Gastrocnemius medialis (tissue), 4 donors: ENCODE measurements at regions of chr22 and their contacts with region 1.

Region 1: DNA sequence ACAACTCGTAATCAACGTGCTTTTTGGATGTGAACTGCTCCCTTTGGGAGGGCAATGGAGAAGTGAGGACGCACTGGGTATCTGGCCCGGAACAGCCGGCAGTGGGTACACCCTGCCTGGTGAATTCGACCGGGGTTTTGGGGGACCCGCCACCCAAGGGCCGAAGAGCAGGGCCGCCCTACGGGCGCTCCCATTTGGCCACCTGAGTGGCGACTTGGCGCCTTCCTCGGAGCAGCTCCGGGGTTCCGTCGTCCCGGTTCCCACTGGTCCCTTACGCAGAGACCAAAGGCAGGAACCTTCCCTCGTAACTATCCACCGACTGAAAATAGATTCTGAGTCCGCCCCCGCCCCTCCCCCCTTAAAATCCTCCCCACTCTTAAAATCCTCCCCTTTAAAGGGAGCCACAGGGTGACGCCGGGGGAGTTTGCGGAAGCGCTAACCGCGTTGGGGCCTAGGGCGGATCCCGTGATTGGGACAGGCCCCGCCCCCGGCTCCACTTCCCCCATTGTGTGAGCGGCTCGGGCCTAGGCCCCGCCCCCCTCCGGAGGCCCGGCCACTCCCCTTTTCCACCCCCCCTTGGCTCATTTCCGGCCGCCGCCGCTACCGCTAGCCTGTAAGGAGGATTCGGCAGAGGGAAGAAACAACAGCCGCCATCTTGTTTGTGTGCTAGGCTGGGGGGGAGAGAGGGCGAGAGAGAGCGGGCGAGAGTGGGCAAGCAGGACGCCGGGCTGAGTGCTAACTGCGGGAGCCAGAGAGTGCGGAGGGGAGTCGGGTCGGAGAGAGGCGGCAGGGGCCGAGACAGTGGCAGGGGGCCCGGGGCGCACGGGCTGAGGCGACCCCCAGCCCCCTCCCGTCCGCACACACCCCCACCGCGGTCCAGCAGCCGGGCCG is 1.0 kb upstream of the EP300 start:
- DNase-seq: peak; percentile 99
- ATAC-seq: peak; percentile 85 to 88
- H3K4me3 ChIP-seq: peak overlapping the region; percentile 76 to 97 (median 88)
- H3K27ac ChIP-seq: peak overlapping the region; percentile 98 to 100 (median 99)
- H3K4me1 ChIP-seq: peaks cover 27 to 36% of the 10 kb centered on the region in 2 donors
- H3K27me3 ChIP-seq: no peaks in the 10 kb centered on the region
- CTCF ChIP-seq: no peak
- POLR2A ChIP-seq: peak; percentile 79 to 92

Region 2: DNA sequence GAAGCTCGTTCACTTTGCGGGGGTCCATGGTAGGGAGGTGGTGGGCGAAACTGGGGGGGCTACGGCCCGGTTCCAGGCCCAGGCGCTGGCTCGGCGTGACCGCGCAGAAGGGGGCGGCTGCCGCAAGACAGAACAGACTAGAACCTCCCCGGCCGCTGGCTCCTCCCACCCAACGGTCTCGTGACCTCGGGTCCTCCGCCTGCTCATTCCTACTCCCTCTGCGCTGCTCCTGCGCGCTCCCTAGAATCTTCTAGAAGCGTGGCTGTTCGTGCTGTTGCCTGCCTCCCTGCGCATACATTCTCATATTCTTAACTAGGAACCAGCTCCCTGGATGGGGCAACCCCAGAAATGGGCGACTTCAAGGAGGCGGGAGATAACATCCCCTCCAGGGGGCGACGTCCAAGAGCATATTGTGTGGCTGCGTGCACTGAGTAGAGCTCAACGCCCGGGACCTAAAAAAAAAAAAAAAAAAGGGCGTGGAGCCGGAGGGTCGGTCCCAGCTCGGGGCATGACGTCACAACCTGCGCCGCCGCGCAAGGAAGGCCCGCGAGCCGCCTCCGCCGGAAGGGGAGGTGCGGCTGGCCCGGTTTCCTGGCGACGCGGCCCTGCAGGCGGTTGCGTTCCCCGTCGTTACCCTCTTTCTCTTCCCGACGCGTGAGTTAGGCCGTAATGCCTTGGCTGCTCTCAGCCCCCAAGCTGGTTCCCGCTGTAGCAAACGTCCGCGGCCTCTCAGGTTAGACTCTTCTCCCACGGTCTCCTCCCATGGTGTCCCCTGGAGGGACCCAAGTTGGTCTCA is 234.7 kb before region 1 on chr22 and contains the starts of genes ST13 and XPNPEP3:
- in situ Hi-C with region 1: no loop called
- intact Hi-C with region 1: loop called (anchors 5 kb)
- DNase-seq: peak; percentile 98
- ATAC-seq: peak; percentile 96 to 97
- H3K4me3 ChIP-seq: peak within 1 kb of the TSS; percentile 79 to 98 (median 90)
- H3K27ac ChIP-seq: peak within 1 kb of the TSS; percentile 96 to 99 (median 98)
- H3K4me1 ChIP-seq: peaks cover 48 to 56% of the 10 kb centered on the region in 2 donors
- H3K27me3 ChIP-seq: no peaks in the 10 kb centered on the region
- CTCF ChIP-seq: peak in 4 of 5 experiments; percentile 18 to 55 (median 25)
- POLR2A ChIP-seq: peak; percentile 88
- total RNA-seq, gene ST13: 122 to 265 (median 197) TPM
- total RNA-seq, gene XPNPEP3: 3.6 to 12.4 (median 7.4) TPM

Region 3: GRCh38 chr22:41022470-41023298 is 68.7 kb before region 1 on chr22:
- in situ Hi-C with region 1: loop called in 2 of 4 experiments (anchors 10 kb)
- intact Hi-C with region 1: loop called (anchors 1 kb)
- DNase-seq: peak; percentile 92 to 94
- ATAC-seq: peak; percentile 87 to 90
- H3K4me3 ChIP-seq: peak overlapping the region; percentile 71 to 85 (median 81)
- H3K27ac ChIP-seq: peak overlapping the region; percentile 89 to 99 (median 94)
- H3K4me1 ChIP-seq: peaks cover 5% of the 10 kb centered on the region in 2 donors
- H3K27me3 ChIP-seq: no peaks in the 10 kb centered on the region
- CTCF ChIP-seq: peak in 2 of 5 experiments; percentile 3 to 6
- POLR2A ChIP-seq: peak; percentile 84 to 88

Region 4: DNA sequence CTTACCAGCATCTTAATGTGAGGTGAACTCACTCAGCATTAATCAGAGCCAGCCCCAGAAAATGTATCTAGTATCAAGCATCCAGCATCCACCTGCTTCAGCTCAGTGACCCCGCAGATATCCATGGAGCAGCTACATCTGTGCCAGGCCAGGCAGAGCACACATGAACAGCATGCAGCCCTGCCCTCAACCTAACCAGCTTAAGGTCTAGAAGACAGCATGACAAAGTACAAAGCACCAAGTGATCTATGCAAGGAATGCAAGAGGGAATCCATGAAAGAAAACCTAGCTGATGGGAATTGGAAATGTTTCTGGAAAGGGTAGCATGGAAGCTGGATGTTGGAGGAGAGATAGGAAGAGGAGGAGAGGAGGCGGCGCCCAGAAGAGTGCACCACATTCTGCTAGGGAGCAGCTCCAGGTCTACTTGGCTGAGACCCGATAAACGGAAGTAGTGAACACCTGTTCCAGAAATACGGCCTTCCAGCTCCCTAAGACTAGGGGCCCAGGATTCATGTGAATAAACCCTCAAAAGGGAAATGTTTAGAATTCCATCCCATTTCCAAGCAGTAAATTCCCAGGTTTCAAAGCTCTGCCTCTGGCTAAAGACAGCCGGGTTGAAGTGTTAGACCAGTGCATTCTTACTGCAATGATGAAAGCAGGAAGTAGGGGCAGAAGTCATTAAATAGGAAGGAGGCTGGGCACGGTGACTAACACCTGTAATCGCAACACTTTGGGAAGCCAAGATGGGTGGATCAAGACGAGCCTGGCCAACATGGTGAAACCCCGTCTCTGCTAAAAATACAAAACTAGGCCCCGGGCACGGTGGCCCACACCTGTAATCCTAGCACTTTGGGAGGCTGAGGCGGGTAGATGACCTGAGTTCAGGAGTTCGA is 90.2 kb after region 1 on chr22:
- in situ Hi-C with region 1: no loop called
- intact Hi-C with region 1: loop called (anchors 5 kb)
- DNase-seq: peak in 1 of 2 donors; percentile 68
- ATAC-seq: peak; percentile 45 to 72
- H3K4me3 ChIP-seq: no peak overlapping the region
- H3K27ac ChIP-seq: peak overlapping the region; percentile 18 to 72 (median 67)
- H3K4me1 ChIP-seq: peaks cover 35% of the 10 kb centered on the region in 2 donors
- H3K27me3 ChIP-seq: no peaks in the 10 kb centered on the region
- CTCF ChIP-seq: no peak
- POLR2A ChIP-seq: no peak

Region 5: DNA sequence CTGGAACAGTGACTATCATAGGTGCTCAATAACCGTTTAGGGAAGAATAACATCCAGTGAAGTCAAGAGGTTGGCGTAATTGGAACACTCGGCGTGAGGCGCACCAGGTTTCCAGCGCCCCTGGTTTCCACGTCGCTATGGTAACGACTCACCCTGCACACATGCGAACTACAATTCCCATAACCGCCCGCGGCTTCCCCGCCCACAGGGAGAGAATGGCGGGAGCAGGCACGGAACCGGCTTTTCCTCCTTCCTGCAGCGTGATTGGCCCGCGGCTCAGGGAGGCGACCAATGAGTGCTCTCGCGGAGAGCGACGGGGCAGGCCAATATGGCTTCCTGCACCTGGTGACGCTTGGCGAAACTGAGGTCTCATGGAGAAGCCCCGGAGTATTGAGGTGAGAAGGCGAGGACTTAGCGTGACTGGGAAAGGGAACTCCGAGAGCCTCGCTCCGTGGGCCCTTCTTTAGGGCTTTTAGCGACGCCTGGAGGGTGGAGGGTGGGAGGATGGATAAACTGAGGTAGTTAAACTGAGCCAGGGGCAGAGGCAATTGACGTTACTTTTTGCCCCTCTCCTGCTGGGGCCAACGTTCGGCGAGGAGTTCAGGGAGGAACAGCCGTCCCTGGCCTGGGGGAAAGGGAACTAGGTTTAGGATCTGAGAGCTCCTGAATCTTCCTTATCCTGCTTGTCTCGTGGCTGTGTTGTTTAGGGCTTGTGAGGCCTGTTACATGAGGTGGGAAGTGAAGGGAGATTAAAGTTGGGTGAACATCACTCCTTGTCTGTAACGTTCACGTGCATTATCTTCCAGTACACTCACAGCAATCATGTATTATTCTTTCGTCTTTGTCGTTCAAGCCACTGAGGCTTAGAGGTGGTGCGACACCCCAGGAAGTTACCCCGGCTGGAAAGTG is 113.9 kb after region 1 on chr22 and contains the start of gene L3MBTL2:
- in situ Hi-C with region 1: no loop called
- intact Hi-C with region 1: loop called (anchors 1 kb)
- DNase-seq: peak; percentile 95 to 97
- ATAC-seq: peak; percentile 99 to 100
- H3K4me3 ChIP-seq: peak within 1 kb of the TSS; percentile 62 to 97 (median 82)
- H3K27ac ChIP-seq: peak within 1 kb of the TSS; percentile 83 to 93 (median 90)
- H3K4me1 ChIP-seq: peaks cover 6 to 10% of the 10 kb centered on the region in 2 donors
- H3K27me3 ChIP-seq: no peaks in the 10 kb centered on the region
- CTCF ChIP-seq: no peak
- POLR2A ChIP-seq: peak in 1 of 2 donors; percentile 43
- total RNA-seq, gene L3MBTL2: 4.8 to 14.4 (median 12.4) TPM

Region 6: DNA sequence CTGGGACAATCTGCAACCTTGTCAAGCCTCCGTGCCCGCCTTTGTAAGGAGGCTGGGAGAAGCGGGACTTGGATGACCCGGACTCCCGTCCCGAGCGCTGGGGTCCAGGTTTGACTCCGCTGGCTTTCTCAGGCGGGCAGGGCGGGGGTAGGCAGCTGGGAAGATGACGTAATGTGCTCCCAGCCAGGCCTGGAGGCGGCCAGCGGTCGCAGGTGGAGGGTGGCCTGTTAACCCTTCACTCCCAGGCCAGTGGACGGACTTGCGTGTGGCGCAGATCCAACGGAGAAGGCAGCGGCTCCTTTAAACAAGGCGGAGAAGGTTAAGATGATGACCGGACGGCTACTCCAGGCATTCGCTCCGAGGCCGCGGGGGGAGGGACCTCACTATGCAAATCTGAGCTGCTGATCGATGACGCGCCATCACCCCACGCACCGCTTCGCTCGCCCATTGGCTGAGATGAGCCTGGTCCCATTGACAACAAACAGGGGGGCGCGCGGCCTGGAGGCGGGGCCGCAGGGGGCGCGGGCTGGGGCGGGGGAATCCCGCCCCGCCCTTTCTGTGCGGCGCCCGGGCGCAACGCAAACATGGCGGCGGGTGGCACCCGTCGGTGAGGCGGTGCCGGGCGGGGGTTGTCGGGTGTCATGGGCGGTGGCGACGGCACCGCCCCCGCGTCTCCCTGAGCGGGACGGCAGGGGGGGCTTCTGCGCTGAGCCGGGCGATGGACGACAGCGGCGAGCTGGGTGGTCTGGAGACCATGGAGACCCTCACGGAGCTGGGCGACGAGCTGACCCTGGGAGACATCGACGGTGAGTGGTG is 741.4 kb after region 1 on chr22 and contains the start of gene SREBF2:
- in situ Hi-C with region 1: no loop called
- intact Hi-C with region 1: loop called (anchors 5 kb)
- DNase-seq: peak; percentile 100
- ATAC-seq: peak; percentile 93 to 98
- H3K4me3 ChIP-seq: peak within 1 kb of the TSS; percentile 75 to 94 (median 90)
- H3K27ac ChIP-seq: peak within 1 kb of the TSS; percentile 92 to 98 (median 98)
- H3K4me1 ChIP-seq: peaks cover 11 to 12% of the 10 kb centered on the region in 2 donors
- H3K27me3 ChIP-seq: no peaks in the 10 kb centered on the region
- CTCF ChIP-seq: peak in 1 of 5 experiments; percentile 4
- POLR2A ChIP-seq: peak; percentile 86 to 90
- total RNA-seq, gene SREBF2: 25.1 to 40.9 (median 36.1) TPM

Region 7: DNA sequence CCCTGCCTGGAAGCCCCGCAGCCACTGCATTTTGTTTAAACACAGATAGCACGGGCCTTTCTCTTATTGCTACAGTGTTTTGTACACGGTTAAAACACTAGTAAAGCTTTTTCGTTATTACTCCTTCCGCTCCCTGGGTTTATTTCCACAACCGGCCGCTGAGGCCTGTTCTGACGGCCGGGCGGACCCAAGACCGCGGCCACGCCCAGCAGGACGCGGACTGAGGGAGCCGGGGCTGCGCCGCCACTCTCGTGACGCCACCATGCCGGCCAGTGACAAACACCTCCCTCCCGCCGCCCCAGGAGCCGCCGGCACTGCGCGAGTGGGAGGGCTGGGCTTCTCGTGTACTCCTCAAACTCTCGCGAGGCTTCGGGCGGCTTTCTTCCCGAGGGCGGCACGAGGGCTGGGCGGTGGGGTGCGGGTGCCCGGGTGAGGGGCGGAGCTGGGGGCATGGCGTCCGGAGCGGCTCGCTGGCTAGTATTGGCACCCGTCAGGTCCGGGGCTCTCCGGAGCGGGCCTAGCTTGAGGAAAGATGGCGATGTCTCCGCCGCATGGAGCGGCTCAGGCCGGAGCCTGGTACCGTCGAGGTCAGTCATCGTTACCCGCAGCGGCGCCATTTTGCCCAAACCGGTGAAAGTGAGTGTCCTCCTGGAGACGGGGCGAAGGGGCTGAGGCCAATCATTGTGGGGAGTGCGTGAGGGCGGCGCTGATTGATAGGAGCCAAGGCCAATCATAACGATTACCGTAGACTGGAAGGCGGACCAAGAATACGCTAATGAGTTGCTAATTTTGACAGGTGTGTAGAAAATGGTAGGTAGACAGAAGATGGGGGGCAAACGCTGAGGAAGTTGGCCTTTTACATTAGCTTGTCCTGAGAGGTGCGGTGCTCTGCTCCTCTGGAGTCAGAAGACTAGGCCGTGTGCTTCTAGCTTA is 988.2 kb after region 1 on chr22 and contains the start of gene SMDT1:
- in situ Hi-C with region 1: no loop called
- intact Hi-C with region 1: loop called (anchors 10 kb)
- DNase-seq: peak; percentile 99
- ATAC-seq: peak; percentile 92 to 94
- H3K4me3 ChIP-seq: peak within 1 kb of the TSS; percentile 69 to 89 (median 86)
- H3K27ac ChIP-seq: peak within 1 kb of the TSS; percentile 95 to 100 (median 100)
- H3K4me1 ChIP-seq: peaks cover 30 to 37% of the 10 kb centered on the region in 2 donors
- H3K27me3 ChIP-seq: no peaks in the 10 kb centered on the region
- CTCF ChIP-seq: peak in 1 of 5 experiments; percentile 26
- POLR2A ChIP-seq: peak; percentile 97
- total RNA-seq, gene SMDT1: 7.9 to 14.6 (median 9.8) TPM

Region 8: DNA sequence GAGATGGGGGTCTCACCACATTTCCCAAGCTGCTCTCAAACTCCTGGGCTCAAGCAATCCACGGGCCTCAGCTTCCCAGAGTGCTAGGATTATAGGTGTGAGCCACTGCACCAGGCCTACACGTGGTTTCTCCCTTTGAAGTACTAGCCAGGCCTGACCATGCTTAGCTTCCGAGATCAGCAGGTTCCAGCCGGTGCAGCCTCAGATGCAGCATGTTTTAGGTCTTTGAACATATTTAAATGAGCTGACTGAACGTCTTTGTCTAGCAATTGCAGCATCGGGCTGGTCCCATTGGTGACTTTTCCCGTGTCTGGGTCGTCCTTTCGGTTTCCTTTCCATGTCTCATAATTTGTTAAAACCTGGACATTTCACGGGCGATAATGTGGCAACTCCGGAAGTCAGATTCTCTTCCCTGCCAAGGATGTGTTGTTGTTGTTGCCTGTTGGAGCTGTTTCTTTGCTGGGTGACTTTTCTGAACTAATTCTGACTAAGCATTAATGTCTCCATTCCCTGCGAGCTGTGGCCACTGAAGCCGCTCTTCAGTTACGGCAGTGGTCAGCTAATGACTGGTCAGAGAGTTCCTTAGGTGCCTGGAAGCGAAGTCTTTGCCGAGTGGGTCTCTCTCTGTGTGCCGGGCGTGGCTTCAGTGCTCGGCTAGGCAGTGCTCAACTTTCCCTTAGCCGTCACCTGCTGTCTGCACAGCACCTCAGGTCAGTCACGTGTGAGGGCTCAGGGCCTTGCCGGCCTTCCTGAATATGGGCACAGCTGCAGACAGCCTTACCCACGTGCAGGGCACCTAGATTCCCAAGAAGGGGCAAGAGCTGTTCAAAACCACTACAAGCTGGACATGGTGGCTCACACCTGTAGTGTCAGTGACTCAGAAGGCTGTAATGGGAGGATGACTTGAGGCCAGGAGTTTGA is 1043.0 kb after region 1 on chr22:
- in situ Hi-C with region 1: no loop called
- intact Hi-C with region 1: no loop called
- DNase-seq: no peak
- ATAC-seq: peak; percentile 29 to 50
- H3K4me3 ChIP-seq: peak overlapping the region in 3 of 4 donors; percentile 8 to 39 (median 24)
- H3K27ac ChIP-seq: no peak overlapping the region
- H3K4me1 ChIP-seq: peaks cover 0 to 5% of the 10 kb centered on the region in 2 donors
- H3K27me3 ChIP-seq: no peaks in the 10 kb centered on the region
- CTCF ChIP-seq: no peak
- POLR2A ChIP-seq: no peak